Left cardiac atrium (tissue), 4 donors: ENCODE measurements at regions of chr18 and their contacts with region 1.

Region 1: DNA sequence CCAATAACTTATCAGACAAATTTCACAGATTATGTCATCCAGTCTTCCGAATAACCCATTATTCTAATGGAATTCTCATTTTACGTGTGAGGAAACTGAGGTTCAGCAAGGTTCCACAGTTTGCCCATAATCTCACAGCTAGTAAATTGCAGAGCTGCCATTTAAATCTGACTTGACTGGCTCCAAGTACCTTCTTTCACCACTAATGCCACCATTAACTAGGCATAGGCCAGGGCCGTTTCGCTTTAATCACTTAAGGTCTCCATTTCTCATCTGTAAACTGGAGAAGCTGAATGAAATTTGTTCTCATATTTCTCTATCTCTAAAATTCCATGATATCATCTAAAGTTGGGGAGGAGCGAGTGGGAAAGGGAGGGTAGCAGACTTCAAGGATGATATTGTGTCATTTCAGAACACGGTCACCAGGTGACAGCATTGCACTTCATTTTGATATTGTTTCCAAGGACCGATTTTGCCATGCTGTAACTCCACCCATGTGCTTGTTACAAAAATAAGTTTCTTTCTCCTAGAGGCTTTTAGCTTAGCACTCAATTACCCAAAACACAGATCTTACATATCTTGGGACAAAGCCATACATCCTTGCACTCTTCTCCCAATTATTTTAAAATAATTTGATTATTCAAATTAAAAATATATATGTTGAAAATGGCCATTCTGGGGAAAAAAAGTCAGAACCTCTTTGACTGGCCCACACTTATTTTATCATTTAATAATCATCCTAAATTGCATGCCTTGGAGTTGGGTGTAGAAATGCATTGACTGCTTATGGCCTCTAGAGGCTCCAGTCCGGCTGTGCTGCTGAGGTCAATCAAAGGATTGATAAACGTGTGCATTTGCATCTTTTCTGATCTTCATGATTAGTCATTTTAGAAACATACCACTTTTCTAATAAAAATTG is 123.8 kb downstream of the AKAIN1 start:
- DNase-seq: no peak
- ATAC-seq: peak; percentile 40 to 72

Region 2: DNA sequence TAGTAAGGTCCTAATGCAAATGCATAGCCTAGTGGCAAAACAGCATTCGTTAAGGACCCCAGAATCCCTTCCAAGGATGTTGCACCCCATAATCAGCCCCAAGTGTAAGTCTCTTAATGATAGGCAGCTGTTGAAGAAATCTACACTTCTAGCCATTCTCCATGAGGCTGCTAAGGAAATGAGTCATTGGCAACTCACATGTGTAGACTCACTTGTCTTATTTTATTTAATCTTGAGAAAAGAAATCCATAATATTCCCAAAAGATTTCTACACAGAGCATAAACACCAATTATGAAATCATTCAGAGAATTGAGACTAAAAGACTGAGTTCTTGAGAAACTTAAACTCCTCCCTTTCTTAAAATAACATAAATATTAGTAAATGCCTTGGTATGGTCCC is 71.3 kb after region 1 on chr18:
- intact Hi-C with region 1: no loop called
- DNase-seq: no peak
- ATAC-seq: no peak

Region 3: DNA sequence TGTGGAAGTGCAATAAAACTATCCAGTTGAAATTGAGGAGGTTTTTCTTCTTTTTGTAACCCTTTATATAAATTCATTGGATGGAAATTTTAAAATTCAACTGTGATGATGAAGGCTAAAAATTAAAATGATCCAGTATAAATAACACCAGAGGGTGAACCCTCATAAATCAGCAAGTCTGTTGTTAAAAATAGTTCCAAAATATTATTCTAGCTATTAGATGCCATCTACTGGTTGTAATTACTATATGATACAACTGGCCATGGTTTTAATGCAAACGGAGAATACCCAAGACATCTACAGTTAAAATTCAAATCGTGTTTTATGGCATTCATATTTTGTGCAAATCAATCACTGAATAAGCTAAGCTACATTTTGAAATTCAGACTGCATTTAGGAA is 768.2 kb after region 1 on chr18:
- intact Hi-C with region 1: loop called in 1 of 2 experiments (anchors 5 kb)
- DNase-seq: no peak
- ATAC-seq: no peak